ENCODE measurements at regions of chr2 and their contacts with region 1.

Region 1: DNA sequence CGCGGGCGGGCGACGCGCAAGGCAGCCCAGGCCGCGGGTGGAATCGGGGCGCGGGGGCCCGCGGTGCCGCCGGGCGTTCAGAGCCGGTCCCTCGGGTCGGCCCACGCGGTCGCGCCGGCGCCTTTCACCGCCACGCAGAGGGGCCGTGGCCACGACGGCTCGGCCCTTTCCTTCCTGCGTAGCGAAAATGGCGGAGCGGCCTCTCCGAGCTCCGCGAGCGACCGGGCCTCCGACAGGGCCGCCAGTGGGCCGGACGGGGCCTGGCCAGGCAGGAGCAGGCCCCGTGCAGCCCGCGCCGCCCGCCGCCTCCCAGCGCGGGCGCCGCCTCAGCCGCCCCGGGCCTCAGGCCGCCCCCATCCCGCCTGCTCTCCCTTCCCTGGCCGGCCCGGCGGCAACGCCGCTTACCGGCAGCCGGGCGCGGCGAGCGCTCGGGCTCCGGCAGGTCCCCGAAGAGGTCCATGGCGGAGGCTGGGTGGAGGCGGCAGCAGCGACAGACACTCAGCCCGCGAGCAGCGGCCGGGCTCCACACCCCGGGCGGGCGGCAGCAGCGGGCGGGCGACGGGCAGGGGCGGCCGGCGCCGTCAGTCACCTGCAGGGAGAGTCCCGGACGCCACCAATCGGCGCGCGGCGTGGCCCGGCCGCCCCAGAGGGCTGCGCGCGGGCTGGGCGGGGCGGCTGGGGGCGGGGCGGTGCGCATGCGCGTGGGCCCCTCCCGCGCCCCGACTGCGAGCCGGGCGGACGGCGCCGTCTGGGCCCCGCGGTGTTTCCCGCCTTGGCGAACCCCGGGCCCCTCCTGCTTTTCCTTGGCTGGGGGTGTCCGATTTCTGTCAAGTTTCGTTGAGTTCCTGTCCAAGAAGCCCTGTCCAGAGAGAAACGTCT is at the start of gene ILKAP:
- DNase-seq: peak; percentile 90 to 95
- ATAC-seq: peak; percentile 95 to 98 (median 95)
- H3K4me3 ChIP-seq: peak within 1 kb of the TSS; percentile 56
- H3K4me3 Mint-ChIP-seq: peak within 1 kb of the TSS; percentile 89
- H3K27ac ChIP-seq: peak within 1 kb of the TSS; percentile 93
- H3K27ac Mint-ChIP-seq: peak within 1 kb of the TSS; percentile 85 to 88
- H3K4me1 ChIP-seq: peaks cover 28% of the 10 kb centered on the region
- H3K4me1 Mint-ChIP-seq: peaks cover 47 to 53% of the 10 kb centered on the region in 2 donors
- H3K27me3 ChIP-seq: no peaks in the 10 kb centered on the region
- H3K27me3 Mint-ChIP-seq: no peaks in the 10 kb centered on the region
- CTCF ChIP-seq: no peak
- total RNA-seq, gene ILKAP: 146 to 200 (median 183) TPM

Region 2: GRCh38 chr2:238042849-238043584 is 160.3 kb before region 1 on chr2:
- intact Hi-C with region 1: no loop called
- DNase-seq: no peak
- ATAC-seq: no peak
- H3K4me3 ChIP-seq: no peak overlapping the region
- H3K4me3 Mint-ChIP-seq: no peak overlapping the region
- H3K27ac ChIP-seq: no peak overlapping the region
- H3K27ac Mint-ChIP-seq: peak overlapping the region; percentile 12 to 27
- H3K4me1 ChIP-seq: no peaks in the 10 kb centered on the region
- H3K4me1 Mint-ChIP-seq: peaks cover 0 to 10% of the 10 kb centered on the region in 2 donors
- H3K27me3 ChIP-seq: no peaks in the 10 kb centered on the region
- H3K27me3 Mint-ChIP-seq: no peaks in the 10 kb centered on the region
- CTCF ChIP-seq: no peak

Region 3: DNA sequence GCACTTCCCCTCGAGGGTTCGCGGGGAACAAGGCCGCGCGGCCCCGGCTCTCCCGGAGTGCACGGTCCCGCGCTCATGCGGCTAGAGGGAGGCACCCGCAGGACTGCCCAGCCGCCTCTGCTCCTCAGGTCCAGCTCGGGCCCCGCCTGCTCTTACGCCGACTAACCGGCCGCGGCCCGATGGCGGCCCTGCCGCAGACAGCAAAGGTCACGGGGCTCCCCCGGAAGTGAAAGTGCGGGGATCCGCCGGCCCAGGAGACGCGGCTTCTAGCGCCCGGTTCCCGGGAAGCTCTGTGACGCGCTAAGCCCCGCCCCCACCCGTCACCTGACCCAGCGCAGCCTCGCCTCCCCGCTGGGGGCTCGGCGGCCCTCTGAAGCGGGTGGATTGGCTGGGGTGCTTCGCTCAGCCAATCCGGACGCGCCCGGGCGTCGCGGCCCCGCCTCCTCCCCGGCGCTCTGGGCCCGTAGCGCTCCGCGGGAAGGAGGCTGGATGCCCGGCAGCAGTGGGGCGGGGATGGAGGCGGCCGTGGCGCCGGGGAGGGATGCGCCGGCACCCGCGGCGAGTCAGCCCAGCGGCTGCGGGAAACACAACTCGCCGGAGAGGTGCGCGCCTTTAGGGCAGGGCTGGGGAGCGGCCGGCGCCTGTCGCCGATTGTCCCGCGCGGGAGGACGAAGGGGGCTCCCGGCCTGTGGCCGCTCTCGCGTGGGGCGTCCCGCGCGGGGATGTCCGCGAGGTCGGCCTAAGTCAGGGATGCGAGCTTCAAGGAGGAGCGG is 142.6 kb before region 1 on chr2 and contains the start of gene SCLY:
- intact Hi-C with region 1: loop called (anchors 5 kb)
- DNase-seq: peak; percentile 90 to 99
- ATAC-seq: peak; percentile 95 to 99 (median 96)
- H3K4me3 ChIP-seq: peak within 1 kb of the TSS; percentile 86
- H3K4me3 Mint-ChIP-seq: peak within 1 kb of the TSS; percentile 89
- H3K27ac ChIP-seq: peak within 1 kb of the TSS; percentile 66
- H3K27ac Mint-ChIP-seq: peak within 1 kb of the TSS; percentile 84 to 93
- H3K4me1 ChIP-seq: peaks cover 16% of the 10 kb centered on the region
- H3K4me1 Mint-ChIP-seq: peaks cover 30 to 32% of the 10 kb centered on the region in 2 donors
- H3K27me3 ChIP-seq: no peaks in the 10 kb centered on the region
- H3K27me3 Mint-ChIP-seq: peaks cover 0 to 10% of the 10 kb centered on the region in 2 donors
- CTCF ChIP-seq: no peak
- total RNA-seq, gene SCLY: 16.3 to 24.6 (median 20.1) TPM

Region 4: DNA sequence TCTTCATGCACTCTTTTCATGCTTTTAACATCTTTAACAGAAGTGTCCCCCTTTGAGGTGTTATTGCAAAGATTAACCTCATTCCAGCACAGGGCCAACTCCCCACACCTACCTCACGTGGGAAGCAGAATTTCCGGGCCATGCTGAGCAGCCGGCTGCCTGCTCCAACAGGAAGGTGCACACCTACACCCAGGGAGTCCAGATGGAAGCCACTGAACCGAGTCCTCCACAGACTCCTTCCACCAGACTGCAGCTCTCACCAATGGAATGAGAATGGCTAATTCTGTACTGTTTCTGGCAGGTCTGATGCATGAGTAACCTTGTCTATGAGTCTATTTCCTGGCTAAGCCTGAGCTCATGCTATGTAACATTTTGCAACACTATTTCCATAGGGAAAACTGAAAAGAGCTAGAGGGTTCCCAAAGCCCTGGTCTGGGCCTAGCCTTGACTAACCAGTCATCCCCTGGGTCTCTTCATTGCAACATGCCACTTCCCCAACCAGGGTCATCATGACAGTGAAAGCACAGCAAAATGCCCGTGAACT is 33.6 kb before region 1 on chr2:
- intact Hi-C with region 1: loop called (anchors 5 kb)
- DNase-seq: no peak
- ATAC-seq: no peak
- H3K4me3 ChIP-seq: no peak overlapping the region
- H3K4me3 Mint-ChIP-seq: peak overlapping the region; percentile 51
- H3K27ac ChIP-seq: peak overlapping the region; percentile 73
- H3K27ac Mint-ChIP-seq: peak overlapping the region; percentile 83 to 93
- H3K4me1 ChIP-seq: peaks cover 23% of the 10 kb centered on the region
- H3K4me1 Mint-ChIP-seq: peaks cover 42 to 61% of the 10 kb centered on the region in 2 donors
- H3K27me3 ChIP-seq: no peaks in the 10 kb centered on the region
- H3K27me3 Mint-ChIP-seq: peaks cover 0 to 3% of the 10 kb centered on the region in 2 donors
- CTCF ChIP-seq: no peak

Region 5: GRCh38 chr2:238187618-238188548 is 15.4 kb before region 1 on chr2:
- intact Hi-C with region 1: loop called (anchors 1 kb)
- DNase-seq: no peak
- ATAC-seq: no peak
- H3K4me3 ChIP-seq: no peak overlapping the region
- H3K4me3 Mint-ChIP-seq: no peak overlapping the region
- H3K27ac ChIP-seq: no peak overlapping the region
- H3K27ac Mint-ChIP-seq: peak overlapping the region; percentile 57 to 93
- H3K4me1 ChIP-seq: peaks cover 31% of the 10 kb centered on the region
- H3K4me1 Mint-ChIP-seq: peaks cover 47 to 53% of the 10 kb centered on the region in 2 donors
- H3K27me3 ChIP-seq: no peaks in the 10 kb centered on the region
- H3K27me3 Mint-ChIP-seq: no peaks in the 10 kb centered on the region
- CTCF ChIP-seq: no peak

Region 6: GRCh38 chr2:238239872-238240751 is 36.8 kb after region 1 on chr2 and contains the start of gene HES6:
- intact Hi-C with region 1: loop called (anchors 1 kb)
- DNase-seq: peak; percentile 83 to 86
- ATAC-seq: peak; percentile 85 to 90 (median 85)
- H3K4me3 ChIP-seq: peak within 1 kb of the TSS; percentile 47
- H3K4me3 Mint-ChIP-seq: peak within 1 kb of the TSS; percentile 89
- H3K27ac ChIP-seq: no peak within 1 kb of the TSS
- H3K27ac Mint-ChIP-seq: peak within 1 kb of the TSS; percentile 35 to 71
- H3K4me1 ChIP-seq: peaks cover 22% of the 10 kb centered on the region
- H3K4me1 Mint-ChIP-seq: peaks cover 0 to 16% of the 10 kb centered on the region in 2 donors
- H3K27me3 ChIP-seq: peaks cover 20% of the 10 kb centered on the region
- H3K27me3 Mint-ChIP-seq: peaks cover 0 to 14% of the 10 kb centered on the region in 2 donors
- CTCF ChIP-seq: no peak
- total RNA-seq, gene HES6: 11.3 to 15.4 (median 13.5) TPM

Region 7: GRCh38 chr2:238288650-238289573 is 85.6 kb after region 1 on chr2:
- intact Hi-C with region 1: no loop called
- DNase-seq: peak; percentile 98 to 99
- ATAC-seq: peak; percentile 73 to 91 (median 83)
- H3K4me3 ChIP-seq: peak overlapping the region; percentile 45
- H3K4me3 Mint-ChIP-seq: peak overlapping the region; percentile 99
- H3K27ac ChIP-seq: peak overlapping the region; percentile 86
- H3K27ac Mint-ChIP-seq: peak overlapping the region; percentile 98 to 99
- H3K4me1 ChIP-seq: peaks cover 35% of the 10 kb centered on the region
- H3K4me1 Mint-ChIP-seq: peaks cover 41 to 46% of the 10 kb centered on the region in 2 donors
- H3K27me3 ChIP-seq: no peaks in the 10 kb centered on the region
- H3K27me3 Mint-ChIP-seq: no peaks in the 10 kb centered on the region
- CTCF ChIP-seq: no peak